AG04449 (cell line): ENCODE measurements at regions of chr18 and their contacts with region 1.

Region 1: GRCh38 chr18:62584241-62585120 is 61.7 kb downstream of the ZCCHC2 start:
- DNase-seq: peak; percentile 49
- H3K4me3 ChIP-seq: no peak overlapping the region; the same call in 1 of the 2 replicates
- CTCF ChIP-seq: peak; percentile 98

Region 2: GRCh38 chr18:62186774-62187542 is 397.5 kb before region 1 on chr18 and contains the starts of genes PIGN and RELCH:
- CTCF ChIA-PET with region 1: interaction called, 105 read pairs
- POLR2A ChIA-PET with region 1: no interaction called
- DNase-seq: peak; percentile 85
- H3K4me3 ChIP-seq: peak within 1 kb of the TSS; percentile 98
- CTCF ChIP-seq: no peak

Region 3: DNA sequence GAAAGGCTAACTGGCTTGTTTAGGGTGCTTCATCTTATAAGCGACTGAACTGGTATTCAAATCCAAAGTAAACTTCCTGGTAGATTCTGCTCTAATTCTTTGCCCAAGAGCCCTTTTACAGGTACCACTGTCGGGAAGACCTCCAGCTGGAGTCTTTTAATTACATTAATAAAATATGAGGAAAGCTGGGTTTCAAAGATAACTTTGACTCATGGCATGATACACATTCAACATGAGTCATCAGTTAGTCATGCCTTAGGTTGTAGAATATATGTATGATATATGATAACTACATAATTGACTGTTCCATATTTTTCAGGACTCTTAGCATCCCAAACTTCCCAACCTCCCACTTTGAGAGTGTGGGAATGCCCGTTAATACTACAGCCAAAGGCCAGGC is 29.3 kb before region 1 on chr18:
- CTCF ChIA-PET with region 1: interaction called, 33 read pairs
- POLR2A ChIA-PET with region 1: no interaction called
- DNase-seq: no peak
- H3K4me3 ChIP-seq: no peak overlapping the region
- CTCF ChIP-seq: no peak

Region 4: DNA sequence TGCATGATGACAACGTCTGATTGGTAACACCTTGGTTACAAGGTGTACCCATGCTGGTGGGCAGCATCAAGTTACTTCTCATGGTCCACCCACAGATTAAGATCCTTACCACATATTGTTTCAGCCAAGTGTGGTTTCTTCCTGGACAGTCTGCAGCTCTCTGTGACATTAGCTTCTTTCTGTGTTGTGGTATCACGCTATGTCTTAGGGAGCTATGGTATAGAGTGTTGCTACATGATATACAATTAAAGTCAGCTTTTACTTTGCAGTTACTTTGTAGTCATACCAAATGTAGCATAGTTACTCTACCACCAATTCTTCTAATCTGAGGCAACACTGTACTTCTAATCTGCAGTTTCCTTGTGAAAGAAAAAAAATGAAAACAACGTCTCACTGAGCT is 12.8 kb before region 1 on chr18:
- CTCF ChIA-PET with region 1: interaction called, 88 read pairs
- POLR2A ChIA-PET with region 1: no interaction called
- DNase-seq: no peak
- H3K4me3 ChIP-seq: no peak overlapping the region
- CTCF ChIP-seq: no peak

Region 5: GRCh38 chr18:62606106-62606505 is 21.6 kb after region 1 on chr18:
- CTCF ChIA-PET with region 1: interaction called, 59 read pairs
- POLR2A ChIA-PET with region 1: no interaction called
- DNase-seq: no peak
- H3K4me3 ChIP-seq: no peak overlapping the region
- CTCF ChIP-seq: no peak

Region 6: GRCh38 chr18:62957885-62958472 is 373.5 kb after region 1 on chr18:
- CTCF ChIA-PET with region 1: interaction called, 42 read pairs
- POLR2A ChIA-PET with region 1: no interaction called
- DNase-seq: no peak
- H3K4me3 ChIP-seq: no peak overlapping the region
- CTCF ChIP-seq: peak; percentile 13

Region 7: DNA sequence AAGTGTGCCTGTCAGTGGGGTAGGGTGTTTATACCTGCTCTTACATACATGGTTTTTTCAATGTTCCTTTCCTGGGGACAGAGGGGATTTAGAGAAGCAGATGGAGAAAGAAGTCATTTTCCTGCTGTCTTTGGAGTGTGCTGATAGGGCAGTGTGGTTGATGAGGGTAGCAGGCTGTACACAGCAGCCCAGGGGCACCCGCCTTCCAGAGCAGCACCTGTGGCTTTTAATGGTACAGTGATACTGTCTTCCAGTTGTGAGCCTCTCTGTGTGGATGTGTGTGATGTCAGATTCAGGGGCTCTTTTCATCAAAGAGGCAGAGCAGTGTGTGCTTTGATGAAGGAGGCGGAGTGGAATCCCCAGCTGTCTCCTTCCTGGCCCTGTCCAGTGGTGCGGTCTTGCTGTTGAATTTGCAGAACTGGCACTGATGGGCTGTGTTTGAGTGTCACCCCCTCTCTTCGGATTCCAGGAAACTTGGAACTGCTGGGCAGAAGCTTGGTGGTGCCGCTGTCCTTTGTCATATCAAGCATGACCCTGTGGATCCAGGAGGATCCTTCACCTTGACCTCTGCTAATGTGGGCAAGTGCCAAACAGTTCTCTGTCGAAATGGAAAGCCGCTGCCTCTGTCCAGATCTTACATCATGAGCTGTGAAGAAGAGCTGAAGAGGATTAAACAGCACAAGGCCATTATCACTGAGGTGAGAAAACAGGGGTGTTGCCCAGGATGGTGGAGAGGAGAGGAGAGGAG is 390.6 kb after region 1 on chr18:
- CTCF ChIA-PET with region 1: interaction called, 243 read pairs
- POLR2A ChIA-PET with region 1: no interaction called
- DNase-seq: no peak
- H3K4me3 ChIP-seq: no peak overlapping the region
- CTCF ChIP-seq: no peak